Cardiac septum (tissue), 1 donor: ENCODE measurements at regions of chr10 and their contacts with region 1.

Region 1: DNA sequence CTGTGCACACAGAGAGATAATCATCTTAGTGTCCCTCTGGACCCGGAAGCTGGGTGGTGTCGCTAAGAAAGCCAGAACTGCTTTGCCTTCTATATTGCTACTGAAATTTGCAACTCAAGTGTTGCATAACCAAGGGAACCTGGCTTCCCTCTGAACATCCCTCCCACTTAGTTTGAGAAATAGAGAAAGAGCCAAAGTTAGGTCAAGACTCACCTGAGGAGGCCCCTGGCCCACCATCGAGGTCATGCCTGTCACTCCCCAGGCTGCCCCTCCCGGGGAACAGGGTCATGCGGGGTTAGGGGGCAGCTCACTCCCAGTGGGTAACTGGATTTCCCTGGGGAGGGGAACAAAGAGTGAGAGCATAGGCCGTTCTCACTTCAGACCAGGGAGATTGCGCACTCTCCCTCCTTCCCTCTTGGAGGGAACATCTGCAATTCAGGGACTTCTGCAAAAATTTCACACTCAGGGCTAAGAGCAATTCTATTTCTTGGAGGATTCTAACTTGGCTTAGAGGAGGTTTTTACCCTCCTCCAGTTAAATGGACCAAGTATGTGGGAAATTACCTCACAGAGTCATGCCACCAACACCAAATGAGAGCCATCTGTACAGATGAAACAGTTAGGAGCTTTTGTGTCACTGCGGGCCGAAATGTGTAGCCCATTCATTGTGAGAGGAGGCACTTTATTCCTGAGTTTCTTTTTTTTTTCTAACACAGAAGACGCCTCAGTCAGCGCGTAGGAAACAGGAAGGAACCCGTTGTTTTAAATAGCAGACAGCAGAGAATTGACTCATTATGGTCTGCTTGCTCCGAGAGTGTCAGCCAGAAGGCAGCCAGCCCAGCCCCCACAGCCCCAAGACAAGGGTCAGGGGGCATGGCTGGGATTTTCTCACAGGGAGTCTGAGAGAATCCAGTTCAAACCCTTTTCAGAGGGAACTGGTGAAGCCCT is 221.3 kb downstream of the ARHGAP12 start:
- DNase-seq: peak; percentile 88

Region 2: GRCh38 chr10:31586723-31587638 is 120.4 kb before region 1 on chr10:
- intact Hi-C with region 1: loop called (anchors 5 kb)
- DNase-seq: no peak

Region 3: GRCh38 chr10:31759799-31760626 is 52.6 kb after region 1 on chr10:
- intact Hi-C with region 1: loop called (anchors 5 kb)
- DNase-seq: peak; percentile 98